Activated T-helper 2 cell treated with anti-CD3 and anti-CD28 coated beads, Interferon-gamma antibody, Interleukin-2, Interleukin-4, amounts not matched to agents 10 μg/mL and 5 μg/mL and 100 μg/mL, durations not matched to agents 14 hours and 24 hours and 36 hours (primary cell): ENCODE measurements at regions of chr4 and their contacts with region 1.

Region 1: DNA sequence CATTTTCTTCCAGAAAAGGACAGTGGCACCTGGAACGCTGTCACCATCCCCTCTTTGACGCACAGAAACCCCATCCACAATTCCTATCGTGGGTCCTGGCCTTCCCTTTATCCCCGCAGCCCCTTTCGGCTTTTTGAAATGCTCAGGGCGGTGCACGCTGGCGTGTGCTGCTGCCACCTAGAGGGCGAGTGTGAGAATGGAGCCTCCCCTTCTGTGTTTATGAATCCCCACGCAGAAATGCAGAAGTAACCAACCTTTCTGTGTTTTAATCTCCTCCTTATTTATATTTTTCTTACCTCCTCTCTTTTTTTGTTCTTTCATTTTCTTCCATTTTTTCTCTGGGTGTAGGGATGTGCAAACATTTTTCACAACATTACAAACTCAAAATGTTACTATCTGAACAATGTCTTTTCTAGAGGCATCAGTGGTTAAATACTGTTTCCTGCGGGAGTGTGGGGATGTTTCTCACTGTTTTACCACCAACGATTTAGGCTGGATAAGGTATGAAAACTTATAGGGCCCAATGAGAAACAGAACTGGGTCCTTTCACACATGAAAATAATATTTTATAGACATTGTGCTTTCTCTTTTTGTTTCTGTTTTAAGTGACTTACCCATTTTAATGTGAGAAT is 50.0 kb downstream of the TMA16 start:
- DNase-seq: peak; percentile 31
- H3K4me3 Mint-ChIP-seq: no peak overlapping the region
- H3K27ac Mint-ChIP-seq: no peak overlapping the region
- H3K4me1 Mint-ChIP-seq: peaks cover 6% of the 10 kb centered on the region
- H3K27me3 Mint-ChIP-seq: no peaks in the 10 kb centered on the region

Region 2: GRCh38 chr4:162497564-162498167 is 1046.9 kb before region 1 on chr4:
- intact Hi-C with region 1: loop called (anchors 5 kb)
- DNase-seq: no peak
- H3K4me3 Mint-ChIP-seq: no peak overlapping the region
- H3K27ac Mint-ChIP-seq: no peak overlapping the region
- H3K4me1 Mint-ChIP-seq: no peaks in the 10 kb centered on the region
- H3K27me3 Mint-ChIP-seq: no peaks in the 10 kb centered on the region

Region 3: GRCh38 chr4:163107754-163108153 is 436.8 kb before region 1 on chr4:
- intact Hi-C with region 1: loop called (anchors 5 kb)
- DNase-seq: no peak
- H3K4me3 Mint-ChIP-seq: no peak overlapping the region
- H3K27ac Mint-ChIP-seq: no peak overlapping the region
- H3K4me1 Mint-ChIP-seq: peaks cover 24% of the 10 kb centered on the region
- H3K27me3 Mint-ChIP-seq: no peaks in the 10 kb centered on the region

Region 4: GRCh38 chr4:163166041-163166579 is 378.4 kb before region 1 on chr4:
- intact Hi-C with region 1: loop called (anchors 5 kb)
- DNase-seq: peak; percentile 56
- H3K4me3 Mint-ChIP-seq: peak overlapping the region; percentile 87
- H3K27ac Mint-ChIP-seq: peak overlapping the region; percentile 96
- H3K4me1 Mint-ChIP-seq: peaks cover 40% of the 10 kb centered on the region
- H3K27me3 Mint-ChIP-seq: peaks cover 2% of the 10 kb centered on the region

Region 5: DNA sequence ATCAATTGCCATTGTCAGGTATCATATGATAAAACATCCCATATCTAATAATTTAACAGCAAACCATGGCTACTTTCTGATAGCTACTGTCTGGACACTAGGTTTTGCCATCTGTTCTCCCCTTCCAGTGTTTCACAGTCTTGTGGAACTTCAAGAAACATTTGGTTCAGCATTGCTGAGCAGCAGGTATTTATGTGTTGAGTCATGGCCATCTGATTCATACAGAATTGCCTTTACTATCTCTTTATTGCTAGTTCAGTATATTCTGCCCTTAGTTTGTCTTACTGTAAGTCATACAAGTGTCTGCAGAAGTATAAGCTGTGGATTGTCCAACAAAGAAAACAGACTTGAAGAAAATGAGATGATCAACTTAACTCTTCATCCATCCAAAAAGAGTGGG is 193.9 kb before region 1 on chr4:
- intact Hi-C with region 1: loop called (anchors 10 kb)
- DNase-seq: no peak
- H3K4me3 Mint-ChIP-seq: no peak overlapping the region
- H3K27ac Mint-ChIP-seq: no peak overlapping the region
- H3K4me1 Mint-ChIP-seq: no peaks in the 10 kb centered on the region
- H3K27me3 Mint-ChIP-seq: peaks cover 10% of the 10 kb centered on the region

Region 6: GRCh38 chr4:163484906-163485305 is 59.6 kb before region 1 on chr4:
- intact Hi-C with region 1: loop called (anchors 1 kb)
- DNase-seq: peak; percentile 24
- H3K4me3 Mint-ChIP-seq: no peak overlapping the region
- H3K27ac Mint-ChIP-seq: no peak overlapping the region
- H3K4me1 Mint-ChIP-seq: peaks cover 4% of the 10 kb centered on the region
- H3K27me3 Mint-ChIP-seq: peaks cover 18% of the 10 kb centered on the region

Region 7: DNA sequence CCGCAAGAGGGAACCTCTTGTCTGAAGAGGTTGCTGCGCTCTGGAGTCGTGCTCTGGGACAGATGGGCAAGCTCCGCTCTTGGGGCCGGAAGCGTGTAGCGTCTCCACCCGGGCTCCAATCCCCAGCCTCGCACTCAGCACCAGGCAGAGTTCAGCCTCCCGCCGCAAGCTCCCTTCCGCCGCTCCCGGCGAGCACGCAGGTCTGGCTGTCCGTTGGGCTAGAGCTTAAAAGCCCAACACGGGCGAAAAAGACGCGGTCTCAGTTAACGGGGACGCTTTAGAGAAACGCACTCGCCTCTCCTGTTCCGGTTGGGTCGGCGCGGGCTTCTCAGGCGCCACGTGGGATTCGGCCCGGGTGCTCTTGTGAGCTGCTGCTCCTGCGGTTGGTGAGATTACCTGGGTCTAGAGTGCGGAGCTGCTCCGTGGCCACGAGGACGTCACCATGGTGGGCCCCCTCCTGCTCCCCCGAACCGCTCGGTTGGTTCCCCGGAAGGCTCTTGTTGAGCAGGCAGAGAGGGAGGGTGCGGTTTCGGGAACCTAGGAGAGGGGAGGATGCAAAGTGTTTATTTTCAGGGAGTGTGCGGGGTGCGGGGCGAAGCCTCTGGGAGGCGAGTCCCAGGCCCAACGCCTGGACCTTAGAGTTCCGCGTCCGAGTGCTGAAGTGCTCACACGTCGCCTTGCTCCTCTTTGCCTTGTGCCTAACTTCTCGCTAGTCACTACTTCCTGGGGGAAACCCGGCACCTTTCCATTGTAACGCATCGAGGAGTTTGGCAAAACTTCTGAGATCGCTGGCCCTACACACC is 50.0 kb before region 1 on chr4 and contains the start of gene TMA16:
- intact Hi-C with region 1: loop called (anchors 2 kb)
- DNase-seq: peak; percentile 86
- H3K4me3 Mint-ChIP-seq: peak within 1 kb of the TSS; percentile 95
- H3K27ac Mint-ChIP-seq: peak within 1 kb of the TSS; percentile 97
- H3K4me1 Mint-ChIP-seq: peaks cover 19% of the 10 kb centered on the region
- H3K27me3 Mint-ChIP-seq: peaks cover 12% of the 10 kb centered on the region
- total RNA-seq, gene TMA16: 75.5 and 81.3 TPM in 2 replicates

Region 8: GRCh38 chr4:163591614-163592020 is 47.1 kb after region 1 on chr4:
- intact Hi-C with region 1: no loop called
- DNase-seq: no peak
- H3K4me3 Mint-ChIP-seq: no peak overlapping the region
- H3K27ac Mint-ChIP-seq: no peak overlapping the region
- H3K4me1 Mint-ChIP-seq: no peaks in the 10 kb centered on the region
- H3K27me3 Mint-ChIP-seq: no peaks in the 10 kb centered on the region

Region 9: DNA sequence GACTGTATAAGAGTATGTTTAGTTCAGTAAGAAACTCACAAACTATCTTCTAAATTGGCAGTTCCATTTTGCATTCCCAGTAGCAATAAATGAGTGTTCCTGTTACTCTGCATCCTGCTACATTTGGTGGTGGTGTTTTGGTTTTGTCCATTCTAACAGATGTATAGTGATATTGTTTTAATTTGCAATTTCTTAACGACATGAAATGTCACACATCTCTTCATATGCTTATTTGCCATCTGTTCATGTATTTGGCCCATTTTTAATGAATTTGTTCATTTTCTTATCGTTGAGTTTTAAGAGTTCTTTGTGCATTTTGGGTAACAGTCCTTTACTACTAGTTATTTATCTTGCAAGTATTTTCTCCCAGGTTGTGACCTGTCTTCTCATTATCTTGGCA is 182.1 kb after region 1 on chr4:
- intact Hi-C with region 1: no loop called
- DNase-seq: no peak
- H3K4me3 Mint-ChIP-seq: no peak overlapping the region
- H3K27ac Mint-ChIP-seq: no peak overlapping the region
- H3K4me1 Mint-ChIP-seq: no peaks in the 10 kb centered on the region
- H3K27me3 Mint-ChIP-seq: no peaks in the 10 kb centered on the region